ENCODE measurements at regions of chr9 and their contacts with region 1.

Region 1: DNA sequence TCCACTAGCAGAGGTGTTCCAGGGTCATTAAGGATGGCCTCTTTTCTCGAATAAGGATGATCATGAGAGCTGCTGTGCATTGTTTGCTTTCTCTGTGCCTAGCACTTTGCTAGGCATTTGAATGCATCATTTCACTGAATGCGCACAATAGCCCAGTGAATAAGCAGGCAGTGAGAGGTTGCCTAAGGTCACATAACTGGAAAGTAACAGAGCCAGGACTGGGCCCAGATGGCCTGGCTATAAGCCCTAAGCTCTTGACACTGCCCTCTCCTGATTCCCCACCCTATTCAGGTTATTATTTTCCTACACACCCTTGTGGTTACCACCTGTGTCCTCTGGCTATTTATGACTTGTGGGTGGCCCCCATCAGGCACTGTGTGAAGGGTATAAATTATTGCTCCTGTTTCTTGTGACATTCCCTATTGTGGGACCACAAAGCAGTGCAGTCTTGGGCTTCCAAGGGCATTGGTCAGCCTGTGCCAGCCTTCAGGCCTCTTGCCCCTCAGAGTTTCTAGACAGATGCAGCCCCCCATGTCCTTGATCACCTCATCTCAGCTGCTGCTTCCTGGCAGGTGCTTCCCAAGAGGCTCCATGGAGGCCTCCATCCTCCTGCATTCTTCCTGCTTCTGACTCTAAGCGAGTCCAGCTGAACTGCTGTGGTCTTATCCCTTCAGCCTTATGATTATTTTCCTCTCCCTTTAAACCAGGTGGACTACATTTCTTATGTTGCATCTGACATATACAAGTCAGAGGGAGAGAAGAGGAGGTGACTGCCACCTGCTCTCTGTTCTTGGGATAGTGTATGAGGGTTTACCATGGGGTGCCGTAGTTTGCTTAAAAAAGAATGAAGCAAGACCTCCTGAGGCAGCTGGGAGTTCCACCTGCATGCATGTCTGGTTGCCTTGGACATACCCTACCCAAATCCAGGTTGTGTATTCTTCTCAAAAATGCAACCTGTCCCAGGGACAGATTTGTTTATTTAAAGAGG is 47.6 kb downstream of the ANGPTL2 start:
- DNase-seq: peak in 34 of 42 donors; percentile 38 to 85 (median 64)

Region 2: GRCh38 chr9:126939821-126940221 is 135.0 kb before region 1 on chr9:
- intact Hi-C with region 1: no loop called
- DNase-seq: peak in 1 of 42 donors; percentile 23

Region 3: DNA sequence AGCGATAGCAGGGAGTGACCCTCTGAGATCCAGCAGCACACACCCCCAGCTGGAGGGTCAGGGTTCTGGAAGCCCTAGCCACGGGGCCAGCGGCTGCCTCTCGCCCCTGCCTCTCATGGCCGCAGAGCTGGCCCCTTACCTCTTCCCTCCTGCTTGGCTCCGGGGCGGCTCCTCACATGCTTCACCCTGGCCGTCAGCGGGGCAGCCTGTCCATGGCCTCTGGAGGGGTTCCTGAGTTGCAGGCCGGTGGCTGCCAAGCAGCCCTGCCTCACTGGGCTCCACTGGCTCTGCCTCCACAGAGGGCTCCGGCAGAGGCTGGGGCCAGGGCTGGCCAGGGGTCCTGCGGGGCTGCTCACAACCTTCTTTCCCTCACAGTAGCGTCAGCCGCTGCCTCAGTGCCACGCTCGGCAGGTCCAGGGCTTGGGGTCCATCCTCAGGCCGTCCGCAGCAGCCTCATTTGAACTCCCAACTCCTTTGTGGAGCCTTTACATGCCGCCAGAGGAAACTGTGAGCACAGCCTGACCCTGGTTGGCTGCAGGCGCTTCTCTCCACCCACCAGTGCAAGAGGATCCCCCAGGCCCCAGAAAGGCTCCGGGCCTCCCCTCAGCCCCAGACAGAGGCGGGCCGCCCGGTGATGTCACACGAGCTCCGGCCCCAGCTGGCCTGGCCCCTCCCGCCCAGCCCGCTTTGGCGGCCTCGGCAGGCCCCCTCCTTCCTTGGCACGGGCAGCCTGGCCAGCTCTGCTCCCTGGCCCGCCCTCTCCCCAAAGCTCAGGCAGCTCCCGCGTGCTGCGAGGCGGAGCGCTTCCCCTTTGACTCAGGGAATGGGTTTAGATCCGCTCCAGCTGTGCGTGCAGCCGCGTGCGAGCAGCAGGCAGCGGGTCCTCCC is 47.6 kb after region 1 on chr9 and contains the start of gene ANGPTL2:
- intact Hi-C with region 1: loop called (anchors 5 kb)
- DNase-seq: peak; percentile 82 to 98 (median 93)